Prostate gland (tissue), 2 donors: ENCODE measurements at regions of chr17 and their contacts with region 1.

Region 1: DNA sequence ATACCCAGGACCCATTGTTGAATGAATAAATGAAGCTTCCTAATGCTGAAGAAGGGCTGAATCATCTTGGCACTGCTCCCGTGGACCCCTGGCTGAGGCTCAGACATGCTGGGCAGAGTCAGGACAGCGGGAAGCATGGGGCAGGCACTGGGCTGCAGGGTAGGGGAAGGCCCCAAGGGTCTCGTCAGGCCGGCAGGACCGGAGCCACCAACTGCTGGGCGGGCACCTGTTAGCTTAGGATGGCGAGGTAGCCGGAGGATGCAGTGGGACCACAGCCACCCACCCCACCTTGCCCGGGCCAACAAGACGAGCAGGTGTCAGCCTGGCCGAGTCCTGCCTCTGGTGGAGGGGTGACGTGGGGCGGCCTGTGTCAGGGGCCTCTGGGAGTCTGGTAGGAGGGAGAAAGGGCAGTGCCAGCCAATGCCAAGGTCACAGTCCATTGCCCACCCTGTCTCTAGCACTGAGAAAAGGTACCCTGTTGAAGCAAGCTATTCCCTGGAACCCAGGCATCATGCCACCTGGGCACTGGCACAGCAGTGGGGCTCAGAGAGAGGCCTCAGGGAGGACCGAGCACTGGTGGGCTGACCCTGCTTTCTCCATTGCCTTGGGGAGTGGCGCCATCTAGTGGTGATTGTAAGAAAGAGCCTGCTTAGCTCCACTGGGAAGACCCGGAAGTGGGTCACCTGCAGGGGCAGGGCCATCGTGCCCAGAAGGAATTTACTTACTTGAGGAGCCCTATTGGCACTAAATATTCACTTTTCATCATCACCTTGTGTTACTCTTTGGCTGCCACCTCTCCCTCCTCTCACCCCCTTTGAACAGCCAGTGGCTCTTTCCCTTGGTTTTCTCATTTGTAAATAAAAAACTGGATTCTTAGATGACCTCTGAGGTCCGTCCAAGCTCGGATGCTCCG is 3.0 kb upstream of the DLX3 start:
- DNase-seq: peak; percentile 77
- H3K4me3 ChIP-seq: no peak overlapping the region
- H3K27ac ChIP-seq: no peak overlapping the region
- H3K4me1 ChIP-seq: peaks cover 16% of the 10 kb centered on the region
- H3K27me3 ChIP-seq: no peaks in the 10 kb centered on the region
- CTCF ChIP-seq: peak; percentile 78 to 99 (median 94)
- POLR2A ChIP-seq: no peak

Region 2: GRCh38 chr17:49327835-49328784 is 669.9 kb before region 1 on chr17:
- intact Hi-C with region 1: no loop called
- DNase-seq: no peak
- H3K4me3 ChIP-seq: no peak overlapping the region
- H3K27ac ChIP-seq: no peak overlapping the region
- H3K4me1 ChIP-seq: no peaks in the 10 kb centered on the region
- H3K27me3 ChIP-seq: no peaks in the 10 kb centered on the region
- CTCF ChIP-seq: no peak
- POLR2A ChIP-seq: no peak

Region 3: DNA sequence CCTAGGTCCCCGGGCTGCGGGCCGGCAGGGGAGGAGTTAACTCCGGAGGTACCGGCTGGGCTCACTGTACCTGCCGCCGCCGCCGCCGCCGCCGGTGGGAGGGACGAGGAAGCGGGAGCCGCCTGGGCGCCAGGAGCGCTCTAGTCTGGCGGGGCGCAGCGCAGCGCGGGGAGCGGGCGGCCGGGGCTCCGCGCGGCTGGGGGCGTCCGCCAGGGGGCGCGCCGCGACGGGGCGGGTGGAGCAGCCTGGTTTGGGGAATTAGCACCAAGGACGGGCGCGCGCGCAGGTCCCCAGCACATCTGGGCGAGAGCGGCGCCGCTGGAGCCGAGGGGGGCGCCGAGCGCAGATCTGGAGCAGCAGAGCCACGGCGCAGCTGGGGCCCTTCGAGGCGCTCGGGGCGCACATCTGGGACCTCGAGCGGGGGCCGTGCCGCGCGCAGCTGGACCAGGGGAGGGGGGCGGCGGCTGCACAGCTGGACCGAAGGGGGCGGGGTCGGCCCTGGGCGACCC is 422.4 kb before region 1 on chr17 and contains the start of gene NXPH3:
- intact Hi-C with region 1: loop called (anchors 5 kb)
- DNase-seq: peak; percentile 54
- H3K4me3 ChIP-seq: peak within 1 kb of the TSS; percentile 50 to 58
- H3K27ac ChIP-seq: peak within 1 kb of the TSS; percentile 67 to 77
- H3K4me1 ChIP-seq: no peaks in the 10 kb centered on the region
- H3K27me3 ChIP-seq: no peaks in the 10 kb centered on the region
- CTCF ChIP-seq: peak; percentile 40 to 89 (median 70)
- POLR2A ChIP-seq: no peak
- total RNA-seq, gene NXPH3: 4.7 to 15.5 TPM

Region 4: GRCh38 chr17:49707608-49708514 is 290.2 kb before region 1 on chr17 and contains the start of gene SLC35B1:
- intact Hi-C with region 1: loop called (anchors 5 kb)
- DNase-seq: peak; percentile 99
- H3K4me3 ChIP-seq: peak within 1 kb of the TSS; percentile 92 to 94
- H3K27ac ChIP-seq: peak within 1 kb of the TSS; percentile 94
- H3K4me1 ChIP-seq: peaks cover 4% of the 10 kb centered on the region
- H3K27me3 ChIP-seq: no peaks in the 10 kb centered on the region
- CTCF ChIP-seq: peak; percentile 68 to 87 (median 80)
- POLR2A ChIP-seq: no peak
- total RNA-seq, gene SLC35B1: 31.0 to 81.0 TPM

Region 5: GRCh38 chr17:49861150-49861892 is 136.7 kb before region 1 on chr17:
- intact Hi-C with region 1: loop called (anchors 1 kb)
- DNase-seq: peak; percentile 33
- H3K4me3 ChIP-seq: no peak overlapping the region
- H3K27ac ChIP-seq: no peak overlapping the region
- H3K4me1 ChIP-seq: no peaks in the 10 kb centered on the region
- H3K27me3 ChIP-seq: no peaks in the 10 kb centered on the region
- CTCF ChIP-seq: peak; percentile 82 to 90 (median 88)
- POLR2A ChIP-seq: no peak

Region 6: GRCh38 chr17:49880291-49881053 is 117.6 kb before region 1 on chr17:
- intact Hi-C with region 1: loop called (anchors 5 kb)
- DNase-seq: peak; percentile 58
- H3K4me3 ChIP-seq: no peak overlapping the region
- H3K27ac ChIP-seq: no peak overlapping the region
- H3K4me1 ChIP-seq: no peaks in the 10 kb centered on the region
- H3K27me3 ChIP-seq: no peaks in the 10 kb centered on the region
- CTCF ChIP-seq: peak; percentile 61 to 97 (median 92)
- POLR2A ChIP-seq: no peak